Posterior cingulate gyrus (tissue), 11 donors: ENCODE measurements at regions of chr5 and their contacts with region 1.

Region 1: DNA sequence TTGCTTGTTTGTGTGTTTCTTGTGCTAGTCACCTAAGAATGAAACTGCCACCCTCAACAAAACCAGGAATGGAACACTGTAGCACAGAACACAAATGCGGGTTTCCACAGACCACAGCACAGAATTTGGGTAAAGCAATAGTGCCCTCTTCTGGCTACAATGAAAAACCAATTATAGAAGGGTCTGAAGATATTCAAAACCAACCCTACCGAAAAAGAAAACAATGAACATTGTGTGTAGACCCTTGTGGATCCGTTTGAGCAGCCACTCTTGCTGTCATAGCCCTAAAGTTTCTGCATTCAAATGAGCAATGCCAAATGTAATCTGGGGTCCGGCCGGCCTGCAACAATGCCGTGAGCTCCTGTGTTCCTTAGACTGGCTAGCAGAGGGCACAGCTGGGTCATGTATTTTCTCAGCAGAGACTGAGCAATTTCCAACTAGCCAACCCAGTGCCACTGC is 8.3 kb upstream of the ENC1 start:
- DNase-seq: peak in 1 of 10 donors; percentile 77

Region 2: GRCh38 chr5:74035521-74035981 is 613.3 kb before region 1 on chr5:
- intact Hi-C with region 1: loop called (anchors 5 kb)
- DNase-seq: no peak

Region 3: DNA sequence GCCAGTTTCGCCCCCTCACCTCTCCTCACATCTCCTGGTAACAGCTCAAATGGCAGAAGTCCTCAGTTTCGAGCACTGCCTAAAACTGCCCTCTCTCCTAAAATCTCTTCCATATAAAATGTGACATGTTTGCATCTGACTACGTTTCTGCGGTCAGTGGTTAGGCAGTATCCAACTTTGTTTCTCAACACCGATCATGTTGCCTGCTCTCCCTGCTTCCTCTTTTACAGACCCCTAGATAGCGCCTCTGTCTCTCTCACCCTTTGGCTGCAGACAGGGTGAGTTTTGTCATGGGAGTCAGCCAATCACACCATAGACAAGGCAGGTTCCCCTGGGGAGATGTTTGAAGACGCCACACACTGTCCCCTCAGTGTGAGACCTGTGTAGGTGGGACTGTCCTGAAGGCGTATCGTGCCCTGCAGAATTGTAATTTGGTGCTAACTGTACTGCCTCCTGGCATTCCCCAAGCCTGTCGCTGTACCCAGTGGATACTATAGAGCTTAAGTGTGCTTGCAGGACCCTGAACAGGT is 37.2 kb after region 1 on chr5:
- intact Hi-C with region 1: no loop called
- DNase-seq: no peak